Activated CD8-positive, alpha-beta T cell treated with anti-CD3 and anti-CD28 coated beads, Interleukin-2, amount 10 ng/mL, durations not matched to agents 7 days and 5 days (primary cell): ENCODE measurements at regions of chr12 and their contacts with region 1.

Region 1: GRCh38 chr12:47889040-47889439 is 15.8 kb downstream of the VDR start:
- DNase-seq: peak; percentile 64
- ATAC-seq: peak; percentile 72
- H3K4me3 Mint-ChIP-seq: peak overlapping the region; percentile 41
- H3K27ac Mint-ChIP-seq: peak overlapping the region; percentile 95
- H3K4me1 Mint-ChIP-seq: peaks cover 92% of the 10 kb centered on the region
- H3K27me3 Mint-ChIP-seq: no peaks in the 10 kb centered on the region

Region 2: GRCh38 chr12:47797441-47797840 is 91.6 kb before region 1 on chr12:
- CTCF ChIA-PET with region 1: interaction called, 11 read pairs
- POLR2A ChIA-PET with region 1: no interaction called
- DNase-seq: peak; percentile 57
- ATAC-seq: peak; percentile 73
- H3K4me3 Mint-ChIP-seq: no peak overlapping the region
- H3K27ac Mint-ChIP-seq: peak overlapping the region; percentile 83
- H3K4me1 Mint-ChIP-seq: peaks cover 47% of the 10 kb centered on the region
- H3K27me3 Mint-ChIP-seq: no peaks in the 10 kb centered on the region

Region 3: GRCh38 chr12:47904713-47905310 is 15.8 kb after region 1 on chr12 and contains the start of gene VDR:
- CTCF ChIA-PET with region 1: interaction called, 55 read pairs
- POLR2A ChIA-PET with region 1: interaction called, 13 read pairs
- DNase-seq: peak; percentile 75
- ATAC-seq: peak; percentile 77
- H3K4me3 Mint-ChIP-seq: peak within 1 kb of the TSS; percentile 81
- H3K27ac Mint-ChIP-seq: peak within 1 kb of the TSS; percentile 69
- H3K4me1 Mint-ChIP-seq: peaks cover 52% of the 10 kb centered on the region
- H3K27me3 Mint-ChIP-seq: peaks cover 30% of the 10 kb centered on the region
- total RNA-seq, gene VDR: 13.2 to 14.5 TPM

Region 4: DNA sequence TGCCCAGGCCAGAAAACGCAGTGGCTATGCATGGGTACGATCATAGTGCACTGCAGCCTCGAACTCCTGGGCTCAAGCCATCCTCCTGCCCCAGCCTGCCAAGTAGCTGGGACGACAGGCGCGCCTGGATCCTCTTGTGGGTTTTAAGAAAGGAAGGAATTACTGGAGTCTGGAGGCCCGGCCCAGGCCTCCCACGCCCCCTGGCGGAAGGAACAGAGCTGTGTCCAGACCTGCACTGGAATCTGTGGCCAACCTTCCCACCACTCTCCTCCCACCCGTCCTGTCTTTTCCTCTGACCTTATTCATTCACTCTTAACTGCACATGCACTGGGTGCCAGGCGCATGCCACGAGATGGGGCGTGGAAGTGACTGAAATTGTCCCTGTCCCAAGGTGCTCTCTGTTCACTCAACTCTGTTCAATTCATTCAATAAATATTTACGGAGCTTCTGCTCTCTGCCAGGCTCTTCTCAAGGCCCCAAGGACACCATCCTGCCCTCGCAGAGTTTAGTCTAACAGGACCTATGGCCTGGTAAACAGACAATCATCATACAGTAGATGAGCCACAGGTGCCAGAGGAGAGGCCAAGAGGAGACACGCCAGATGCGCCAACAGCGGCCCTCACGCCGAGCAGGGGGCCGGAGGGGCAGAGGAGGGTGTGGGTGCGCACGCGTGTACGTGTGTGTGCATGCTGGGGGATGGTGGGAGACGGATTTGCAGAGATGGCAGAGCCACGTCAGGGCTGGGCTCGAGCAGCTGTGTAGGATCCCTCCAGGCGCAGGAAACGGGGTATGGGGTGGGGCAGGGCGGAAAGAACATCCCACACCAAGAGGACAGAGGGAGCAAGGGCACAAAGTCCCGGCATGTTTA is 60.6 kb after region 1 on chr12:
- CTCF ChIA-PET with region 1: interaction called, 10 read pairs
- POLR2A ChIA-PET with region 1: no interaction called
- DNase-seq: peak; percentile 50
- ATAC-seq: peak; percentile 75
- H3K4me3 Mint-ChIP-seq: no peak overlapping the region
- H3K27ac Mint-ChIP-seq: no peak overlapping the region
- H3K4me1 Mint-ChIP-seq: peaks cover 12% of the 10 kb centered on the region
- H3K27me3 Mint-ChIP-seq: peaks cover 18% of the 10 kb centered on the region